Calu3 (cell line): ENCODE measurements at regions of chr3 and their contacts with region 1.

Region 1: DNA sequence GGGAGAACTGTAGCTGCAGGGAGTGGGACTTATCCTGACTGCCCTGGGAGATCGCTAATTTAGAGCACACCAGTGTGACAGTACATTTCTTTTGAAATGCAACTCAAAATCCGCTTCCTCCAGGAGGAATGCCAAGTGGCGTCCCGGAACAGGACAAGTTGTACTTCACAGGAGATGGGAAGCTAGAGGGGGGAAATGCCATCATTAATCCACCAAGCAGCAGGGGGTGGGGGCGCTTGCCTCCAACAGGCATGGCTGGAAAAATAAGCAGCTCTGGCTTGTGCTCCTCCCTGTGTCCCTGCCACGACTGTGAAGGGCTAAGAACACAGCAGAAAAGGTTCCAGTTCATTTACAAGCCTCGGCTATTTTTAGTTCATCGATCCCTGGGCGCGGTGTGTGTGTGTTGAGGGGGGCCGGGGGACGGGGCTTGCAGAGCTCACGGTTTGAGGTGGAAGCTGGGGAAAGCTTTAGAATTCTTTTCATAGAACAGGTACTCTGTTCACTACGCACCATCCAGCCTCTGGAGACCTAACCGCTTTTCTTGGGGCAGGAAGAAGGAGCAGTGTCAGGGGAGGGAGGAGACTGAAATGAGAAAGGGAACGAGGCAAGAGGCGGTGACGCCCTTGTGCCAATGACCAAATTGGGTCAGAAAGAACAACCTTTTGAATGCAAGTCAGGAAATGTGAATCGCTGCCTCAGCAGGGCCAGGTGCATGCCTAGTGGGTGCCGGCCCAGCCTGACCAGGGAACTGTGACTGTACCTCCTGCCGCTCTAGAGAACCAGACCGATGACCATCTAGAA is 51.8 kb upstream of the DGKG start:
- DNase-seq: peak; percentile 59
- H3K4me3 Mint-ChIP-seq: peak overlapping the region; percentile 57
- H3K27ac Mint-ChIP-seq: no peak overlapping the region
- H3K4me1 Mint-ChIP-seq: peaks cover 30% of the 10 kb centered on the region
- H3K27me3 Mint-ChIP-seq: peaks cover 85% of the 10 kb centered on the region
- CTCF ChIP-seq: no peak

Region 2: DNA sequence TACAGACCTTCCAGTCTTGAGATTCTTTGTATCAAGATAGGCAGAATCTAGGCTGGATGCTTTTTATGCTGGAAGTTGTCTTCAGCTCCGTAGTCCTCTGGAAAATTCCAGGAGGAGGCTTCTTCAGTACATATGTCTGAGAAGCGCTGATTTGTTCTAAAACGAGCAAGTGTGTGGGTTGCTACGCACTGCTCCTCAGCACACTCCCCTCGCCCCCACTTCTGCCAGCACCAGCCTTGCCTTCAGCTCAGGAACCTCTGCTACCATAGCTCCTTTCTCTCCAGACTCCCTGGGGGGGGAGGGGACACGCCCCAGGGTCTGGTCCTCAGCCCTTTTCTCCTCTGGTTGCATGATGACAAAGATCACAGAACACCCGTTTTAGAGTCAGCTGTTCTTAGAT is 400.5 kb before region 1 on chr3:
- CTCF ChIA-PET with region 1: no interaction called
- intact Hi-C with region 1: no loop called
- DNase-seq: no peak
- H3K4me3 Mint-ChIP-seq: no peak overlapping the region
- H3K27ac Mint-ChIP-seq: no peak overlapping the region
- H3K4me1 Mint-ChIP-seq: no peaks in the 10 kb centered on the region
- H3K27me3 Mint-ChIP-seq: peaks cover 68% of the 10 kb centered on the region
- CTCF ChIP-seq: no peak

Region 3: GRCh38 chr3:186476044-186476468 is 62.2 kb after region 1 on chr3:
- CTCF ChIA-PET with region 1: interaction called, 3 read pairs
- intact Hi-C with region 1: loop called (anchors 10 kb)
- DNase-seq: no peak
- H3K4me3 Mint-ChIP-seq: no peak overlapping the region
- H3K27ac Mint-ChIP-seq: no peak overlapping the region
- H3K4me1 Mint-ChIP-seq: no peaks in the 10 kb centered on the region
- H3K27me3 Mint-ChIP-seq: peaks cover 72% of the 10 kb centered on the region
- CTCF ChIP-seq: no peak

Region 4: GRCh38 chr3:186826976-186827731 is 413.3 kb after region 1 on chr3:
- CTCF ChIA-PET with region 1: no interaction called
- intact Hi-C with region 1: loop called (anchors 10 kb)
- DNase-seq: peak; percentile 96
- H3K4me3 Mint-ChIP-seq: peak overlapping the region; percentile 55
- H3K27ac Mint-ChIP-seq: no peak overlapping the region
- H3K4me1 Mint-ChIP-seq: peaks cover 33% of the 10 kb centered on the region
- H3K27me3 Mint-ChIP-seq: peaks cover 84% of the 10 kb centered on the region
- CTCF ChIP-seq: no peak

Region 5: DNA sequence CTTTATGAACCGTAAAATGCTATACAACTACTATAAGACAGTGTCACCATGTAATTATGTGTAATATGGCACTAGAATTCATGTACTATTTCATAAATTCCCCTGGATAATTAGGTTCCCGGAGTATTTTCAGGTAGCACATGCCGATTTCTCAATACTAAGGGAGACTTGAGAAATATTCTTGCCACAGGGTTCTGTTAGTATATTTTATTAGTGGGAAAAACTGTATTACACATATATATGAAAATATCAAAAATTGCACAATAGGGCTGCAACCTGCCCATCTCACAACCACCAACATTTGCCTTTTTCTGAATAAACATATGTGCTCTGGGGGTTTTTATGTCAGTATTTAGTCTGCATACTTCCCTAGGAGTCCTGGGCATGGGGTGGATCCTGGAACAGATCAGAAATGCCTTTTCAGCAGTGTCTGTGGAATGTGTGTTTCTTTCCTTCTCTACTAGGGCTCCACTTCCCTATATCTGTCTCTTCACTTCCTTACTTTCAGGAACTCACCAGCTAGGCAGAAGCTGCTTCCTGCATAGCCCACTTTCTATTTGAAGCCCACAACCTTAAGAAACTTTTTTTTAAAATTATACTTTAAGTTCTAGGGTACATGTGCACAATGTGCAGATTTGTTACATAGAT is 638.0 kb after region 1 on chr3:
- CTCF ChIA-PET with region 1: no interaction called
- intact Hi-C with region 1: no loop called
- DNase-seq: no peak
- H3K4me3 Mint-ChIP-seq: no peak overlapping the region
- H3K27ac Mint-ChIP-seq: no peak overlapping the region
- H3K4me1 Mint-ChIP-seq: no peaks in the 10 kb centered on the region
- H3K27me3 Mint-ChIP-seq: no peaks in the 10 kb centered on the region
- CTCF ChIP-seq: no peak